T-cell (primary cell): ENCODE measurements at regions of chr9 and their contacts with region 1.

Region 1: DNA sequence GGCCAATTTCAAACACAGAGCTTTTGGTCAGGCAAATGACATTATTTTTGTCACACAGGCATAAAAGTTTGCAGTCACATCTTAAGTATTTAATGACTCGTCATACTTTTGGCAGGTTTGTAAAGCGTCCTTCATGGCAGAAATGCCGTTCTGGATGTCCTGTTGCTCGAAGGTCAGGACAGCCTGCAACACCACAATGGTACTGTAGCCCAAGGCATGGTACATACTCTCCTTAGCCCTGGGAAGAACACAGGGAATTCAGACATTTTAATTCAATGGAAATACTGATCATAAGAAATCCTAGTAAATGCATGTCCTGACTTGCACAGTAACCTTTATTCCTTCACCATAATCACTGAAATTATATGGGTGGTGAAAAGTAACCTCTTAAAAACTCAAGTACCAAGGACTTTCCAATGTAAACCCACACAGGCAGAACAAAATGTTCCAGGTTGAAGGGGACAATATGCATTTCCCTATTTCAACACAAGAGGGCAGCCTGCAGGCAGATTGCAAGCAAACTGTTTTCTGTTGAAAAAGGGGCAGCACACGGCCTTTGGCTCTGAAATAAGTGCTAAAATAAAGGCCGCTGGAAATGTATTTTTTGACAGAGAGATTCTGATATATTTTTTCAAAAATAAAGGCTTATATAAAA is 95.7 kb downstream of the TTC39B start:
- DNase-seq: peak in 33 of 35 experiments; percentile 2 to 78 (median 33)
- ATAC-seq: peak in 2 of 4 experiments; percentile 43 to 55
- H3K4me3 ChIP-seq: no peak overlapping the region
- H3K4me3 Mint-ChIP-seq: no peak overlapping the region
- H3K27ac ChIP-seq: no peak overlapping the region
- H3K27ac Mint-ChIP-seq: no peak overlapping the region
- H3K4me1 ChIP-seq: no peaks in the 10 kb centered on the region
- H3K4me1 Mint-ChIP-seq: peaks cover 6 to 12% (median 10%) of the 10 kb centered on the region in 3 donors
- H3K27me3 ChIP-seq: no peaks in the 10 kb centered on the region
- H3K27me3 Mint-ChIP-seq: no peaks in the 10 kb centered on the region

Region 2: DNA sequence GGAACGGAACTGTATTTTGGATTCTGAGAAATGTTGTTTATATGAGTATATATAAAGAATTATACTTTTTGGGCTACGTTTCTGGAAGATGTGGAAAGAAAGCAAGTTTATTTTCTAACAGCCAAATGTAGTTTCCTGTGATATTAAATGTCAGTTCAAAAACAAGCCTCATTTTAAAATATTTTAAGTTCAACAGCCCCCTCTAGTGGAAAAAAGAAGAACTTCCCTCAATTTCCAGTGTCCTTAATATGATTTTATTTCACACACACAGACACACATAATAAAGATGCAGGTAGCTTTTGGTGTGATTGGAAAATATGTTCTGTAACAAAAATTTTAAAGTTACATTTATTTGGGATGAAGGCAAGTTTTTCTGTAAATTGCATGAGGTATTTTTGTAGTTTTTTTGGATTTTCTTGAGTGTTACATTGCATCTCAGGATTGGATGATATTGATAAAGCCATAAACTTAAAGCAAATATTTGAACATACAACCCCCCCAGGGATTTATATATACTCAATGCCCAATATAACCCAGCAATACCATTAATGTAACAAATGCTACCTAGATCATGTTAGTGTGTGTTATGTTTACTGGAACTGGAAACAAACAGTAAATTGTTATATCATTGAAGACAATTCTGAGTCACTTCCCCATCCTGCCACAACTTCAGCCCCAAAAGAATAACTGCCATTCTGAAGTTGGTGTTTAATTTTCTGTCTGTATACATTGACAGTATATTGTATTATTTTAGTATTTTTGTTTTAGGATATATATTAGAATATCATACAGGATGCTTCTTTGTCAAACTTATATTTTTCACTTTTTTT is 395.6 kb after region 1 on chr9:
- CTCF ChIA-PET with region 1: interaction called in 1 of 2 experiments, 10 read pairs
- POLR2A ChIA-PET with region 1: no interaction called
- DNase-seq: peak in 2 of 35 experiments; percentile 31 to 65
- ATAC-seq: peak in 1 of 4 experiments; percentile 32
- H3K4me3 ChIP-seq: no peak overlapping the region
- H3K4me3 Mint-ChIP-seq: no peak overlapping the region
- H3K27ac ChIP-seq: no peak overlapping the region
- H3K27ac Mint-ChIP-seq: no peak overlapping the region
- H3K4me1 ChIP-seq: peaks cover 0 to 2% of the 10 kb centered on the region in 2 experiments
- H3K4me1 Mint-ChIP-seq: no peaks in the 10 kb centered on the region
- H3K27me3 ChIP-seq: no peaks in the 10 kb centered on the region
- H3K27me3 Mint-ChIP-seq: no peaks in the 10 kb centered on the region